Heart left ventricle (tissue), 16 donors: ENCODE measurements at regions of chr7 and their contacts with region 1.

Region 1: GRCh38 chr7:107879400-107880035 is 11.5 kb upstream of the DLD start:
- DNase-seq: no peak
- ATAC-seq: peak in 3 of 4 donors; percentile 77 to 85 (median 79)
- H3K4me3 ChIP-seq: no peak overlapping the region
- H3K27ac ChIP-seq: no peak overlapping the region
- H3K4me1 ChIP-seq: peaks cover 0 to 20% (median 0%) of the 10 kb centered on the region in 12 donors
- H3K27me3 ChIP-seq: no peaks in the 10 kb centered on the region
- CTCF ChIP-seq: peak; percentile 59 to 90 (median 68)
- POLR2A ChIP-seq: no peak

Region 2: GRCh38 chr7:106947244-106947728 is 932.2 kb before region 1 on chr7:
- intact Hi-C with region 1: loop called in 1 of 10 experiments (anchors 10 kb)
- DNase-seq: peak in 4 of 5 donors; percentile 30 to 55 (median 42)
- ATAC-seq: peak; percentile 67 to 90 (median 86)
- H3K4me3 ChIP-seq: no peak overlapping the region
- H3K27ac ChIP-seq: no peak overlapping the region
- H3K4me1 ChIP-seq: peaks cover 0 to 2% (median 0%) of the 10 kb centered on the region in 12 donors
- H3K27me3 ChIP-seq: no peaks in the 10 kb centered on the region
- CTCF ChIP-seq: peak; percentile 54 to 82 (median 72)
- POLR2A ChIP-seq: no peak

Region 3: GRCh38 chr7:107194049-107194448 is 685.5 kb before region 1 on chr7:
- intact Hi-C with region 1: loop called in 1 of 10 experiments (anchors 10 kb)
- DNase-seq: no peak
- ATAC-seq: no peak
- H3K4me3 ChIP-seq: no peak overlapping the region
- H3K27ac ChIP-seq: peak overlapping the region in 2 of 12 donors; percentile 0 to 31
- H3K4me1 ChIP-seq: peaks cover 0 to 13% (median 0%) of the 10 kb centered on the region in 12 donors
- H3K27me3 ChIP-seq: no peaks in the 10 kb centered on the region
- CTCF ChIP-seq: peak in 2 of 12 donors; percentile 13 to 22
- POLR2A ChIP-seq: no peak

Region 4: DNA sequence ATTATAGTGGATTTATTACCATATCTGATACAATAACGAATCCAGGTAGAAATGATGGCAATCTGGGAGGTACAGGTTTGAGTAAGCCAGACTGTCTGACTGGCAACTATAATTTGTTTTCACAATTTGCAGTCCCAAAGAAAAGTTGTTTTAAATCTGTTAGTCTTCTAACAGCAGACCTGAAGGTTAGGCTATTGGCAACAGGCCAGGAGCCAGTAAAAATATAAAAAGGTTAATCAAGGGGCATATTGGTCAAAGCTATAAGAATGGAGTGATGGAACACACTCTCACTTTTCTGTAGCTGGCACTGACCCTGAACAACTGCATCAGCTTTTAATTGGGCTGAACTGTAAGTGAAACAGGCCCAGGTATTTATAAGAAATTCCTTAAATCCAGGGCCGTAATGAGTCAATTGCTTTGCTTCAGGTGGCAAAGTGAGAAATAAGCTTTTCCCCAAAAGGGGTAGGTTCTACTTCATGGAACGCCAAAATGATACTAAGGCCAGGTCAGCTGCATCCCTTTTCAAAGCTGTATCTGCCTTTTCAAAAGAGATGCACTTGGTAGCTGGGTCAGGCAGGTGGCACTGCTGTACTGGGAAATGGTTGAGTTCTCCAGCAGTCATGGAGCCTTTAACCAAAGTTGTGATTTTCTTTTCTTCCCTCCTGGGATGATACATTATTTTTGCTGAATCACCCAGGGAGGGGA is 416.6 kb before region 1 on chr7:
- intact Hi-C with region 1: loop called in 8 of 10 experiments (anchors 2 to 10 kb)
- DNase-seq: peak in 4 of 5 donors; percentile 49 to 72 (median 59)
- ATAC-seq: peak; percentile 74 to 92 (median 91)
- H3K4me3 ChIP-seq: no peak overlapping the region
- H3K27ac ChIP-seq: peak overlapping the region in 10 of 12 donors; percentile 8 to 52 (median 36)
- H3K4me1 ChIP-seq: peaks cover 0 to 25% (median 1%) of the 10 kb centered on the region in 12 donors
- H3K27me3 ChIP-seq: no peaks in the 10 kb centered on the region
- CTCF ChIP-seq: peak; percentile 53 to 90 (median 78)
- POLR2A ChIP-seq: no peak

Region 5: GRCh38 chr7:107471292-107472070 is 408.0 kb before region 1 on chr7:
- intact Hi-C with region 1: loop called in 4 of 10 experiments (anchors 5 to 10 kb)
- DNase-seq: no peak
- ATAC-seq: peak; percentile 35 to 62 (median 48)
- H3K4me3 ChIP-seq: peak overlapping the region in 11 of 12 donors; percentile 6 to 56 (median 42)
- H3K27ac ChIP-seq: peak overlapping the region; percentile 12 to 84 (median 74)
- H3K4me1 ChIP-seq: peaks cover 0 to 18% (median 0%) of the 10 kb centered on the region in 12 donors
- H3K27me3 ChIP-seq: no peaks in the 10 kb centered on the region
- CTCF ChIP-seq: peak in 7 of 12 donors; percentile 9 to 44 (median 34)
- POLR2A ChIP-seq: no peak

Region 6: DNA sequence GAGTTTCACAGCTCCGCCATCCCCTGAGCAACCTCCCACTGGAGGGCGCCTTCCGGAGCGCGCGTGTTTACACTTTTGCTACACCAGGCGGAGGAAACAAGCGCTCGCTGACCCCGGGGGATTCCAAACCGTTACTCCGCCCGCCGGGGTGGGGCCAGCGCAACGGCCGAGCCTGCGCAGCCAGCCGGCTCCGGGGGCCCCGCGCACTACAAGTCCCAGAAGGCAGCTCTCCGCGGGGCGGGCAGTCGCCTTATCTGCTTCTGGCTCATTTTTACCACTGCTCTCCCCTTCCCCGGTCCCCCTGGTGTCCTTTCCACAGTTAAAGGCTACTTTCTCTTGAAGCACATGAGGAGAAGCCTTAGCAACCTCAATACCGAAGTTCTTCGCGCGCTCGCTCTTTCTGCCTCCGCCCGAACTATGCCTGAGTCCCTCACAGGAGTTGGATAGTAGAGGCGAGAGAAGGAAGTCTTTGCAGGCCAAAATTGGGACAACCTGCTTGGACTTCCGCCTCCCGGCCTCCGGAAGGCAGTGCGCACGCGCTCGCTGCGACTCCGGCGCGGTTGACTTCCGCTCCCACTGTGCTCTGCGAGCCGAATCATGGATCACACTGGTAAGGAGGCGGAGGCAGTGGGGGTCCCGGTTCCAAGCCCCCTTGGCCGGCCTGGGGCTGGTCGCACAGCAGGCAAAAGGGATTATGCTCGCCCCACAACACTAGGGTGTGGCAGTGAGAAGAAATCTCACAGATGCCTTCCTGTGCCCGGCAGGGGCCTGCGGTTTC is 135.8 kb before region 1 on chr7 and contains the start of gene CBLL1:
- intact Hi-C with region 1: loop called (anchors 2 to 5 kb)
- DNase-seq: peak; percentile 97 to 98 (median 98)
- ATAC-seq: peak; percentile 98 to 99 (median 98)
- H3K4me3 ChIP-seq: peak within 1 kb of the TSS; percentile 67 to 94 (median 82)
- H3K27ac ChIP-seq: peak within 1 kb of the TSS; percentile 92 to 99 (median 97)
- H3K4me1 ChIP-seq: peaks cover 7 to 48% (median 28%) of the 10 kb centered on the region in 12 donors
- H3K27me3 ChIP-seq: no peaks in the 10 kb centered on the region
- CTCF ChIP-seq: peak; percentile 51 to 94 (median 74)
- POLR2A ChIP-seq: peak in 1 of 2 donors; percentile 72
- total RNA-seq, gene CBLL1: 17.1 to 39.8 (median 24.3) TPM

Region 7: GRCh38 chr7:107938456-107939234 is 59.1 kb after region 1 on chr7:
- intact Hi-C with region 1: no loop called
- DNase-seq: peak in 4 of 5 donors; percentile 51 to 63 (median 54)
- ATAC-seq: peak; percentile 34 to 66 (median 58)
- H3K4me3 ChIP-seq: no peak overlapping the region
- H3K27ac ChIP-seq: peak overlapping the region; percentile 28 to 85 (median 65)
- H3K4me1 ChIP-seq: peaks cover 0 to 64% (median 42%) of the 10 kb centered on the region in 12 donors
- H3K27me3 ChIP-seq: no peaks in the 10 kb centered on the region
- CTCF ChIP-seq: no peak
- POLR2A ChIP-seq: no peak